ENCODE measurements at regions of chr6 and their contacts with region 1.

Region 1: DNA sequence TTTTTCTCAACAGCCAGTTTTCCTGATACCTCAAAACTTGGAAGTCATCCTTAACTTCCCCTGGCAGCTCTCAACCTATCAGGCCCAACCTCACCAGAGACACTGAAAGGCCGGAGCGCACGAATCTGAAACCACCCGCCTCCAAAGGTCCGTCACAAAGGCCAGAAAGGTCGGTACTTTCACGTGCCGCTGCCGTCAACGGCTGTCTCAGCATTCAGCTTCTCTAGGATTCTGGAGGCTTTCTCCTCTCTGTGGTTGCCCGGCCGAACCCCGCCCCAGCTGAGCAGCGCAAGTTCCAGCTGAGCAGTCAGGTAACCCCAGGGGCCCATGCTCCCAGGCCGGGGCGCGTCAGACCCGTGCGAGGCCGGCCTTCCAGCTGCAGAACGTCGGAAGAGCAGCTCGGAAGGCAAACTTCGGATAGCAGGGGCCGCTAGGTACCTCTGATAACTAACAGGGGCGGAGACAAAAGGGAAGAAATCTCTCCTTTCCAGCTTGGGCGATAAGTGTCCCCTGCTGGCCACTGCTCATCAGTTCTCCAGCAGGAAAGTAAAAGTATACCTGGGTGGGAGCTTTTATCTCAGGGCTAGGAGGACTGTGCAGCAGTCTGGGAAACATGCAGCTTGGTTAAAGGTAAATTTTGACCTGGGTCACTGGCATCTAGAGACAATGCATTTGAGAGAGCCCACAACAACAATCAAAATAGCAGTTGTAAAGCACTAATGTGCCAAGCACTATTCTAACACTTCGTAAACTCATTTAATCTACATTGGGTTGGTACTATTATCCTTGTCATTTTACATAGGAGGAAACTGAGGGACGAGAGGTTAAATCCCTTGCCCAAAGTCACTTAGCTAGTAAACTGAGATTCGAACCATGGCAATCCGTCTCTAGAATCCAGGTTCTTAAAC is 16.1 kb downstream of the ZSCAN12 start:
- DNase-seq: peak; percentile 77
- ATAC-seq: peak; percentile 98
- H3K4me3 Mint-ChIP-seq: peak overlapping the region; percentile 88
- H3K27ac Mint-ChIP-seq: peak overlapping the region; percentile 94
- H3K4me1 Mint-ChIP-seq: peaks cover 18% of the 10 kb centered on the region
- H3K27me3 Mint-ChIP-seq: no peaks in the 10 kb centered on the region
- CTCF ChIP-seq: no peak

Region 2: DNA sequence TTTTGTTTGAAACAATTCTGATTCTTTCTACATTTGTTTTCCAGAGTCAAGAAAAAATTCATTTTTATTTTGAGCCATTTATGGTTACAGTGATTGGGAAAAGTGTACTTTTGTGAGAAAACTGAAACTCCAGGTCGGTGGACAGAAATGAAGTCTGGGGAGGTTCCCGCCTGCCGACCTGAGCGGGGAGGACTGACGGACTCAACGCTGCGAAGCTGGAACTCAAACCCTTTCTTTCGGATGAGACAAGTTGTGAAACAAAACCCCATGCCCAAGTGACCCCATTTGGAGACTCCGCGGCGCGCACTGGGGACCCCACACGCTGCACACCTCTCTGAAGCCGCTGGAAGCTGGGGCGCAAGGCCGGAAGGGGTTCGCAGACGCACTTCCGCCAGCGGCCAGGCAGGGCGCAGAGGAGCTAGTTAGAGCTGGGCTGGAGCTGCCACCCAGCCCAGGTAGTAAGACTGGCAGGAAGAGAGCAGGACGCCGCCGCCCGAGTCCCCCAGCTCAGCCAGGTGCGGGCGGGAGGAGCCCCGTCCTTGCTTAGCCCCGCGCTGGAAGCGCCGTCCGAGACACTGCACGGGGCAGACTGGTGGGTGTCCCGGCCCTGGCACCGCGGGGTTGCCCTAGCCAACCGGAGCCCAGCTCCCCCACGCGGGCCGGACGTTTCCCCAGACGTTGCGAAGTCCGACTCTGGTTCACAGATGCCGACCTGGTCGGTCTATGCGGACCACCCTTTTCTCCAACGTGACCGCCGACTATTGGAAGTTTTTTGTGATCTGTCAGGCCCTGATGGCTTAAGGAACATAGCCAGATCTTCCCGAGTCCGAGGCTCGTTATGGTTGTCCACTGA is 278.9 kb before region 1 on chr6:
- CTCF ChIA-PET with region 1: interaction called, 3 read pairs
- POLR2A ChIA-PET with region 1: interaction called, 10 read pairs
- intact Hi-C with region 1: no loop called
- DNase-seq: peak; percentile 80
- ATAC-seq: peak; percentile 98
- H3K4me3 Mint-ChIP-seq: peak overlapping the region; percentile 94
- H3K27ac Mint-ChIP-seq: peak overlapping the region; percentile 95
- H3K4me1 Mint-ChIP-seq: peaks cover 10% of the 10 kb centered on the region
- H3K27me3 Mint-ChIP-seq: peaks cover 6% of the 10 kb centered on the region
- CTCF ChIP-seq: no peak

Region 3: GRCh38 chr6:28124102-28124970 is 259.2 kb before region 1 on chr6 and contains the start of gene ZSCAN16:
- CTCF ChIA-PET with region 1: no interaction called
- POLR2A ChIA-PET with region 1: interaction called, 5 read pairs
- intact Hi-C with region 1: loop called (anchors 1 kb)
- DNase-seq: peak; percentile 72
- ATAC-seq: peak; percentile 96
- H3K4me3 Mint-ChIP-seq: peak within 1 kb of the TSS; percentile 97
- H3K27ac Mint-ChIP-seq: peak within 1 kb of the TSS; percentile 95
- H3K4me1 Mint-ChIP-seq: peaks cover 27% of the 10 kb centered on the region
- H3K27me3 Mint-ChIP-seq: no peaks in the 10 kb centered on the region
- CTCF ChIP-seq: no peak
- total RNA-seq, gene ZSCAN16: 10.6 and 12.6 TPM in 2 replicates

Region 4: GRCh38 chr6:28252009-28252975 is 131.2 kb before region 1 on chr6 and contains the start of gene ZKSCAN4:
- CTCF ChIA-PET with region 1: no interaction called
- POLR2A ChIA-PET with region 1: interaction called, 9 read pairs
- intact Hi-C with region 1: loop called (anchors 2 kb)
- DNase-seq: peak; percentile 57
- ATAC-seq: peak; percentile 90
- H3K4me3 Mint-ChIP-seq: peak within 1 kb of the TSS; percentile 95
- H3K27ac Mint-ChIP-seq: peak within 1 kb of the TSS; percentile 80
- H3K4me1 Mint-ChIP-seq: peaks cover 30% of the 10 kb centered on the region
- H3K27me3 Mint-ChIP-seq: peaks cover 2% of the 10 kb centered on the region
- CTCF ChIP-seq: no peak
- total RNA-seq, gene ZKSCAN4: 10.5 and 11.1 TPM in 2 replicates

Region 5: DNA sequence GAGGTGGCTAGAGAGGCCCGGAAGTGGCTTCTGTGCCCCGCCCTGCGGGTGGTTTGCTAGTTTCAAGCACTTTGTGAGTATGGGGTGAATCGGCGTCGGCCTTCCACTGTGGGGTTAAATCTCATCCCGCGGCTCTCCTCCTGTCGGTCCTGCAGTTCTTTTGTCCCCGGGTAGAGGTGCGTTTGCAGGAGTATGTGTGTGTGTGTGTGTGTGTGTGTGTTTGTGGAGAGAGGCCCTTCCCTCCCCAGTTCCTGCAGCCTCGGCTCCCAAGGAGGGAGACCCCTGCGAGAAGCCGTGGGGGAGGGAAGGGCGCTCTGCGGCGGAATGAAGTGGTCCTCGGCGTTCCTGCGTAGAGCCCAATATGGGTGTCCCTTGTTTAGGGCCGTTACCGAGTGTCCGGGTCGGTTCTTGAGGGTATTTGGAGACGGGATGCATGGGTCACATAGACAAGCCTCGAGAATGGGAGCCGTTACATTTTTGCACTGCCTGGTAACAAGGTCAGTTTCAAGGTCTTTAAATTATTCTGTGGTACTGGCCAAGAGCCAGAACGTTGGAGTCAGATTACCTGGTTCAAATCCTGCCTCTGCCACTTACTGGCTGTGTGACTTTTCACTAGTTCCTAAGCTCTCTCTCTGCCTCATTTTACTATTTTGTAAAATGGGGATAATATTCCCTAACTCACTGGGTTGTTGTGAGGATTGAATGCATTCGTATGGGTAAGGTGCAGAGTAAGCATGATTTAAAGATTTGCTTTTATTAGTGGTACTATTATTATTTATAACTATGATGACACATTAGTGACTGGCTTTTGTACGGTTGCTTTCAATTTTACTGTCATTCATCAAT is 33.4 kb before region 1 on chr6 and contains the start of gene ZKSCAN3:
- CTCF ChIA-PET with region 1: interaction called, 19 read pairs
- POLR2A ChIA-PET with region 1: interaction called, 15 read pairs
- intact Hi-C with region 1: loop called (anchors 1 kb)
- DNase-seq: peak; percentile 68
- ATAC-seq: peak; percentile 100
- H3K4me3 Mint-ChIP-seq: peak within 1 kb of the TSS; percentile 96
- H3K27ac Mint-ChIP-seq: peak within 1 kb of the TSS; percentile 94
- H3K4me1 Mint-ChIP-seq: peaks cover 28% of the 10 kb centered on the region
- H3K27me3 Mint-ChIP-seq: peaks cover 7% of the 10 kb centered on the region
- CTCF ChIP-seq: no peak
- total RNA-seq, gene ZKSCAN3: 5.6 and 6.3 TPM in 2 replicates

Region 6: GRCh38 chr6:28355743-28356665 is 27.5 kb before region 1 on chr6:
- CTCF ChIA-PET with region 1: interaction called, 19 read pairs
- POLR2A ChIA-PET with region 1: interaction called, 15 read pairs
- intact Hi-C with region 1: loop called (anchors 2 kb)
- DNase-seq: peak; percentile 41
- ATAC-seq: peak; percentile 85
- H3K4me3 Mint-ChIP-seq: peak overlapping the region; percentile 91
- H3K27ac Mint-ChIP-seq: peak overlapping the region; percentile 71
- H3K4me1 Mint-ChIP-seq: peaks cover 21% of the 10 kb centered on the region
- H3K27me3 Mint-ChIP-seq: no peaks in the 10 kb centered on the region
- CTCF ChIP-seq: peak; percentile 82

Region 7: GRCh38 chr6:28371706-28372451 is 11.6 kb before region 1 on chr6:
- CTCF ChIA-PET with region 1: no interaction called
- POLR2A ChIA-PET with region 1: interaction called, 12 read pairs
- intact Hi-C with region 1: loop called (anchors 1 kb)
- DNase-seq: no peak
- ATAC-seq: peak; percentile 85
- H3K4me3 Mint-ChIP-seq: peak overlapping the region; percentile 41
- H3K27ac Mint-ChIP-seq: peak overlapping the region; percentile 84
- H3K4me1 Mint-ChIP-seq: peaks cover 24% of the 10 kb centered on the region
- H3K27me3 Mint-ChIP-seq: no peaks in the 10 kb centered on the region
- CTCF ChIP-seq: no peak

Measured in activated B cell treated with CpG ODN at 0.5 μM for 24 hours (primary cell).